Lower leg skin (tissue), 4 donors: ENCODE measurements at regions of chr7 and their contacts with region 1.

Region 1: GRCh38 chr7:143239813-143240212 is 18.0 kb downstream of the TAS2R40 start:
- DNase-seq: no peak
- H3K4me3 ChIP-seq: no peak overlapping the region
- CTCF ChIP-seq: no peak
- POLR2A ChIP-seq: no peak

Region 2: GRCh38 chr7:143299840-143300239 is 60.0 kb after region 1 on chr7:
- intact Hi-C with region 1: loop called (anchors 5 kb)
- DNase-seq: no peak
- H3K4me3 ChIP-seq: no peak overlapping the region
- CTCF ChIP-seq: no peak
- POLR2A ChIP-seq: no peak

Region 3: GRCh38 chr7:144118339-144118738 is 878.5 kb after region 1 on chr7:
- intact Hi-C with region 1: no loop called
- DNase-seq: no peak
- H3K4me3 ChIP-seq: no peak overlapping the region
- CTCF ChIP-seq: no peak
- POLR2A ChIP-seq: no peak